ENCODE measurements at regions of chr2 and their contacts with region 1.

Region 1: GRCh38 chr2:20015472-20016083 is 3.1 kb upstream of the MATN3 start:
- H3K4me3 Mint-ChIP-seq: no peak overlapping the region
- H3K27ac Mint-ChIP-seq: no peak overlapping the region
- H3K4me1 Mint-ChIP-seq: peaks cover 9% of the 10 kb centered on the region
- H3K27me3 Mint-ChIP-seq: peaks cover 40% of the 10 kb centered on the region

Region 2: DNA sequence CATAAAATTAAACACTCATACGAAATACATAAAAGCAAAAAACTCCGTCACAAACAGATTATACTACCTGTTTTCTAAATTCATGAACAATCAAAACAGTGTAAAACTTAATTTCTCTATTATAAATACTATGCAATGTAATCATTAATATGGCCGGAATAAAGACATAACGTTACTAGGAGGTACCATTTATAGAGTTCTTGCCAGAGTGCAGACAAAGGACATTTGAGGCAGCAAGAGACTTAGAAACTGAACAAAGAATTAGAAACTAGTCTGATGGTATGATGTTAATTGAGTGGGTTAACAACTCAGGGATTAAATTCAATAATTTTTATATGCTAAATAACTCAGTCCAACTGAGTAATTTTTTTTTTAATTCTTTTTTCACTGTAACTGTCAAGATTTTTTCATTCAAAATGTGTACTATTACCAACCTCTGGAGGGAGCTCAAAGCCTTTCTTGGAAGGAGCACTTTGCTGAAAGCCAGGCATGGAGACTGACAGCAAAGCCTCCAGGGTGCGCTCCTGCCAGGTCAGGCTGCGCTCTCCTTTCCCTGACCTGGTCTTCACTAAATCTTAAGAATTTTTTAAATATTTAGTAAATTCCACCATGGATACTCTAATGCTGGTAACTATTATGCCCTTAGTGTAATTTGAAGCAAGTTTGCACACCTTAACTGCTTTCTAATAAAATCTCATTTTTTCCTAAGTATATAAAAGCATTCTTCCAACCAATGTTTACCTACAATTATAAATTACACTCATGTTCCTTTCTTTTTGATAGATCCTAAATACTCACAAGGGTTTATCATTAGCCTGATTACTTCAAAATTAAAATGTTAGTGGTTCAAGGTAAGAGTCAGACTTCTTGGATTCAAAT is 59.8 kb before region 1 on chr2:
- intact Hi-C with region 1: loop called (anchors 2 kb)
- H3K4me3 Mint-ChIP-seq: no peak overlapping the region
- H3K27ac Mint-ChIP-seq: no peak overlapping the region
- H3K4me1 Mint-ChIP-seq: no peaks in the 10 kb centered on the region
- H3K27me3 Mint-ChIP-seq: no peaks in the 10 kb centered on the region

Measured in dendritic cell treated with granulocyte-macrophage colony-stimulating factor and Interleukin-4, amounts not matched to agents 40 ng/mL and 50 ng/mL, for 4 days (primary cell).